ENCODE measurements at regions of chrX and their contacts with region 1.

Region 1: GRCh38 chrX:1576201-1576992 is 15.0 kb upstream of the AKAP17A start:
- DNase-seq: no peak
- H3K4me3 ChIP-seq: no peak overlapping the region
- H3K27ac ChIP-seq: no peak overlapping the region
- H3K4me1 ChIP-seq: no peaks in the 10 kb centered on the region
- H3K27me3 ChIP-seq: no peaks in the 10 kb centered on the region
- CTCF ChIP-seq: no peak

Region 2: DNA sequence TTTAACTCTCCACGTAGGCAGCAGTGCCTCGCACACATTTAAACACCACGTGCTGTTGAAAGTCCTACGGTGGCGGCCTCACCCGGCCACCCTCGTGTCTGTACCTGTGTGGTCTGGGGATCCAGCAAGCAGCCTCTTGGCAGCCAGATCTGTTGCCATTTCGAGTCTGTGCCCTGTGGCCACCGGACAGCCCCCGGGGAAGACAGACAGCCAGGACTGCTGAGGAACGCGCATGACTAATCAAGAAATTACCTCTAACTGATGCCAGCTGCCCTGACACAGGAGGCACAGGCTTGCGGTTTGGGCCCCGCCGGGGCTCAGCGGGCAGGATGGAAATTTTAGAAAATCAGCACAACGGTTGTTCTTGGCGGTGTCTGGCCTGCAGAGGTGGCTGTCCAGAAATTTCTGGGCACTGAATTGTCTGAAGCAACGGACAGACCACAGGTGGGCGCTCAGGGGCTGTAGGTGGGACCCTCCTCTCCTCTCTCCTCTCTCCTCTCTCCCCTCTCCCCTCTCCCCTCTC is 108.1 kb before region 1 on chrX:
- intact Hi-C with region 1: loop called (anchors 5 kb)
- DNase-seq: peak; percentile 21
- H3K4me3 ChIP-seq: no peak overlapping the region
- H3K27ac ChIP-seq: no peak overlapping the region
- H3K4me1 ChIP-seq: no peaks in the 10 kb centered on the region
- H3K27me3 ChIP-seq: peaks cover 3% of the 10 kb centered on the region
- CTCF ChIP-seq: no peak

Region 3: GRCh38 chrX:1700757-1701156 is 124.4 kb after region 1 on chrX:
- intact Hi-C with region 1: no loop called
- DNase-seq: no peak
- H3K4me3 ChIP-seq: no peak overlapping the region
- H3K27ac ChIP-seq: no peak overlapping the region
- H3K4me1 ChIP-seq: no peaks in the 10 kb centered on the region
- H3K27me3 ChIP-seq: no peaks in the 10 kb centered on the region
- CTCF ChIP-seq: no peak